A673 (cell line): ENCODE measurements at regions of chr9 and their contacts with region 1.

Region 1: DNA sequence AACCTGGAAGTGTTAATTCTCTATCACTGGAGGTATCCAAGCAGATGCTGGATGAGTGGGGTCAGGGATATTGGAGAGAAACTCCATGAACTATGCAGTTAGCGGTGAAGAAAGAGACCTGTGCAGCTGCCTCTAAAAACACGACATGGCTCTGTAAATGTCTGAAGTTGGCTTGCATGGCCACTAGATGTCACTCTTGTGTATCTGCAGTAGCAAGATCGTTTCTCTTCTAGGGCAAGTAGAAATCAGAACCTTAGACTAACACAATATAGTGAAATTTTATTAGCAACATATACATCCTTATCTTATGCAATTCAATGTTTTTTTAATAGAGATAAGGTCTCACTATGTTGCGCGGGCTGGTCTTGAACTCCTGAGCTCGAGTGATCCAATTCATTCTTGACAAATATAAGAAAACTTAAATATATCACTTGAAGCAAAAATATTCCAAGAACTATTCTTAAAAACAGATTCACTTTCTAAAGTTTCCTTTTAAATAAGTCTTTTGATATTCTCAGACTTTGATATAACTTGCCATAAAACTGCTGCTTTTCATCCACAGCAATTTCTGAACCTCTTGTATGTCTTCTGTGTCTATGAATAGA is 2.9 kb downstream of the OR2S2 start:
- DNase-seq: peak; percentile 77
- H3K4me3 ChIP-seq: no peak overlapping the region
- H3K27ac ChIP-seq: no peak overlapping the region
- H3K4me1 ChIP-seq: no peaks in the 10 kb centered on the region
- H3K27me3 ChIP-seq: peaks cover 25% of the 10 kb centered on the region
- CTCF ChIP-seq: peak; percentile 89

Region 2: GRCh38 chr9:36023260-36024048 is 68.4 kb after region 1 on chr9:
- CTCF ChIA-PET with region 1: interaction called, 8 read pairs
- POLR2A ChIA-PET with region 1: no interaction called
- intact Hi-C with region 1: loop called (anchors 2 kb)
- DNase-seq: peak; percentile 71
- H3K4me3 ChIP-seq: no peak overlapping the region
- H3K27ac ChIP-seq: no peak overlapping the region
- H3K4me1 ChIP-seq: no peaks in the 10 kb centered on the region
- H3K27me3 ChIP-seq: no peaks in the 10 kb centered on the region
- CTCF ChIP-seq: peak; percentile 87

Region 3: DNA sequence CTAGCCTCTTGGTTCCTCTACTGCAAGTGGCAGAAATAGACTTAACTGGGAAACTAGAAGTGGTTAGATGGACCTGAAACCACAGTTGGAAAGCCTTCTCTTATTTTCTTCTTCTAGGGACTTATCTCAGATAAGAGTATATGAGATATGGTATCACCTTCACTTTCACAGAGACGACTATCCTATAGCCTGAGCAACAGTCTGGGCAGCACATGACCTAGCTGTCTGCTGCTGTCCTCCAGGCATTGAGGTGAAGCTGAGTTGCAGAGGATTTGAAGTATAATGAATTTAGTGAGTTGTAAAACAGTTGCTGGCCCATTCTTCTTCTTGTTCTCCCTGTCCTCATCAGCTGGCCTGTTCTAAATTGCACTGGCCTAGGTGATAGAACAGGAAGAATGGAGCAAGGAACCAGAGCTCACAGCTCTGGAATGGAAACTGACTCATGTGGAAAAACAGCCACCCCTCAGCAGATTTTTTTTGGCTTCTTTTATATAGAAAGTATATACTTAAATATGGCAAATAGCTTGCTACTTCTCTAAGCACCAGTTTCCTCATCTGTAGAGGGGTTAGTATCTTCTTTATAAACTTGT is 109.5 kb after region 1 on chr9:
- CTCF ChIA-PET with region 1: interaction called, 12 read pairs
- POLR2A ChIA-PET with region 1: no interaction called
- intact Hi-C with region 1: no loop called
- DNase-seq: no peak
- H3K4me3 ChIP-seq: no peak overlapping the region
- H3K27ac ChIP-seq: no peak overlapping the region
- H3K4me1 ChIP-seq: no peaks in the 10 kb centered on the region
- H3K27me3 ChIP-seq: no peaks in the 10 kb centered on the region
- CTCF ChIP-seq: no peak

Region 4: DNA sequence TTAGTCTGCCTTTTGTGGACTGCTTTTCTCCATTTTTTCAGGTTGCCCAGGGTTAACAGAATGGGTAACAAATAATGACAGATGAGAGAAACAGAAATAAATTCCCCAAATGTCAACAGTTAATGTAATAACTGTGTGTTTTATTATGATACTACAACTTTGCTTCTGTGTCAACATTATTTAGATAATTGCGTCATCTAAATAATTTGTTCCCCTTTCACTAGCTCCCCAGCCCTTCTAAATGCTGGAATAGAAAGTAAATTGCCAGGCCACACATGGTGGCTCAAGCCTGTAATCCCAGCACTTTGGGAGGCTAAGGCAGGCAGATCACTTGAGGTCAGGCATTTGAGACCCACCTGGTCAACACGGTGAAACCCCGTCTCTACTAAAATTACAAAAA is 391.5 kb after region 1 on chr9:
- CTCF ChIA-PET with region 1: no interaction called
- POLR2A ChIA-PET with region 1: no interaction called
- intact Hi-C with region 1: no loop called
- DNase-seq: no peak
- H3K4me3 ChIP-seq: no peak overlapping the region
- H3K27ac ChIP-seq: no peak overlapping the region
- H3K4me1 ChIP-seq: no peaks in the 10 kb centered on the region
- H3K27me3 ChIP-seq: no peaks in the 10 kb centered on the region
- CTCF ChIP-seq: no peak

Region 5: GRCh38 chr9:37096628-37097027 is 1141.6 kb after region 1 on chr9:
- CTCF ChIA-PET with region 1: no interaction called
- POLR2A ChIA-PET with region 1: no interaction called
- intact Hi-C with region 1: no loop called
- DNase-seq: no peak
- H3K4me3 ChIP-seq: no peak overlapping the region
- H3K27ac ChIP-seq: no peak overlapping the region
- H3K4me1 ChIP-seq: no peaks in the 10 kb centered on the region
- H3K27me3 ChIP-seq: no peaks in the 10 kb centered on the region
- CTCF ChIP-seq: no peak